ENCODE measurements at regions of chrX and their contacts with region 1.

Region 1: GRCh38 chrX:86171366-86171765 is 23.1 kb downstream of the DACH2 start:
- DNase-seq: no peak
- H3K4me3 ChIP-seq: no peak overlapping the region
- H3K27ac ChIP-seq: no peak overlapping the region
- H3K4me1 ChIP-seq: no peaks in the 10 kb centered on the region
- H3K27me3 ChIP-seq: no peaks in the 10 kb centered on the region
- CTCF ChIP-seq: peak; percentile 55

Region 2: GRCh38 chrX:85630904-85631303 is 540.5 kb before region 1 on chrX:
- CTCF ChIA-PET with region 1: no interaction called
- POLR2A ChIA-PET with region 1: no interaction called
- intact Hi-C with region 1: loop called (anchors 10 kb)
- DNase-seq: no peak
- H3K4me3 ChIP-seq: no peak overlapping the region
- H3K27ac ChIP-seq: no peak overlapping the region
- H3K4me1 ChIP-seq: no peaks in the 10 kb centered on the region
- H3K27me3 ChIP-seq: no peaks in the 10 kb centered on the region
- CTCF ChIP-seq: no peak

Region 3: DNA sequence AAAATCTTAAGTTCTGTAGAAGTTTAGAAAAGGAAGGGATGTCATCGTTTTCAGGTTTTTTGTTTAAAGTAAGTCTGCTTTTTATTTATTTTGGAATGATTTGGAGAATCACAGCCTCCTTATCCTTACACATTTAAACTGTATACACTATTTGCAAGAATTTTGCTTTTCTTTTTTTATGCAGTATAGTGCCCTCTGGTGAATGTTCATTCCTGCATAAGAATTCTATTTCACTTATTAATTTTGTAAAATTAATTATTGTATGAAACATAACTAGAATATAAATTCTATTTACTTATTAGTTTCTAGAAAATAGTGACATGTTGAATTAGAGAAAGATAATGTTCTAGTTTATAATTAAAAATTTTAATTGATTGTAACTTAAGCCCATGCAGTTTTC is 21.5 kb after region 1 on chrX:
- CTCF ChIA-PET with region 1: no interaction called
- POLR2A ChIA-PET with region 1: no interaction called
- intact Hi-C with region 1: no loop called
- DNase-seq: no peak
- H3K4me3 ChIP-seq: no peak overlapping the region
- H3K27ac ChIP-seq: no peak overlapping the region
- H3K4me1 ChIP-seq: no peaks in the 10 kb centered on the region
- H3K27me3 ChIP-seq: no peaks in the 10 kb centered on the region
- CTCF ChIP-seq: no peak

Measured in PC-9 (cell line).